WTC11 (cell line): ENCODE measurements at regions of chr15 and their contacts with region 1.

Region 1: GRCh38 chr15:44066316-44066740 is 128.7 kb downstream of the FRMD5 start:
- DNase-seq: peak; percentile 63
- ATAC-seq: peak; percentile 86
- H3K4me3 Mint-ChIP-seq: no peak overlapping the region
- H3K27ac Mint-ChIP-seq: peak overlapping the region; percentile 38; the same call in 1 of the 2 replicates
- H3K4me1 Mint-ChIP-seq: peaks cover 7% of the 10 kb centered on the region
- H3K27me3 Mint-ChIP-seq: no peaks in the 10 kb centered on the region
- CTCF ChIP-seq: peak; percentile 85

Region 2: GRCh38 chr15:43881944-43882343 is 184.4 kb before region 1 on chr15:
- CTCF ChIA-PET with region 1: interaction called, 20 read pairs
- POLR2A ChIA-PET with region 1: no interaction called
- DNase-seq: peak; percentile 67
- ATAC-seq: peak; percentile 89
- H3K4me3 Mint-ChIP-seq: no peak overlapping the region
- H3K27ac Mint-ChIP-seq: peak overlapping the region; percentile 7; the same call in 1 of the 2 replicates
- H3K4me1 Mint-ChIP-seq: peaks cover 16% of the 10 kb centered on the region
- H3K27me3 Mint-ChIP-seq: no peaks in the 10 kb centered on the region
- CTCF ChIP-seq: peak; percentile 50

Region 3: GRCh38 chr15:43939070-43939469 is 127.3 kb before region 1 on chr15:
- CTCF ChIA-PET with region 1: interaction called, 13 read pairs
- POLR2A ChIA-PET with region 1: no interaction called
- DNase-seq: no peak
- ATAC-seq: peak; percentile 58
- H3K4me3 Mint-ChIP-seq: no peak overlapping the region
- H3K27ac Mint-ChIP-seq: no peak overlapping the region
- H3K4me1 Mint-ChIP-seq: peaks cover 14% of the 10 kb centered on the region
- H3K27me3 Mint-ChIP-seq: no peaks in the 10 kb centered on the region
- CTCF ChIP-seq: peak; percentile 20; the same call in 1 of the 2 replicates

Region 4: GRCh38 chr15:43998607-43999006 is 67.7 kb before region 1 on chr15:
- CTCF ChIA-PET with region 1: no interaction called
- POLR2A ChIA-PET with region 1: no interaction called
- DNase-seq: no peak
- ATAC-seq: no peak
- H3K4me3 Mint-ChIP-seq: no peak overlapping the region
- H3K27ac Mint-ChIP-seq: no peak overlapping the region
- H3K4me1 Mint-ChIP-seq: peaks cover 8% of the 10 kb centered on the region; the same call in 1 of the 2 replicates
- H3K27me3 Mint-ChIP-seq: no peaks in the 10 kb centered on the region
- CTCF ChIP-seq: no peak